B cell (primary cell): ENCODE measurements at regions of chr5 and their contacts with region 1.

Region 1: DNA sequence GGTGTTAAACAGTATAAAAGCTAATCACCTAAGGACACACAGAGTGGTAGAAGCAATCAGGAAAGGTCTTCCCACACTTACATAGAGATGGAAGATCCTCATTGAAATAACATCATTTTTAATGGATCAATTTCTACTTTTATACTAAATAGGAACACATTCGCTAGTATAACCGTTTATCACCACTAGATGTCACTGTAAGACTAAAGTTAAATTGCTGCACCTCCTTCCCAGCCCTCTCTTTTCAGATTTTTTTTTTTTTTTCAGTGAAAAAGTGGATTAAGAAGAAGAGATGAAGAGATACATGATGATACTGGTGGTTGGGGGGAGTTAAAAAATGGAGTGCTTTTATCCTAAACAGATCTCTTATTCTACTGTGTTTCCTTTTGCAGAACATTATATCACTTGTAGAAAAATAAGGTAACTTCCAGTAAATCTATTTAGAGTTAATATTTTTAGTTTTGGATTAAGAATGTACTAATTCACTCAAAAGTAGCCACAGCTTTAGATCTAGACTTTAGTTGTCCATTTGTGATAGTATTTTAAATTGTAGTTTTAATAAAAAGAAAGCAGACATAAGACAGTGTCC is 116.9 kb upstream of the ARRDC3 start:
- DNase-seq: peak; percentile 41
- ATAC-seq: no peak
- H3K4me3 ChIP-seq: no peak overlapping the region
- H3K4me3 Mint-ChIP-seq: no peak overlapping the region
- H3K27ac ChIP-seq: no peak overlapping the region
- H3K27ac Mint-ChIP-seq: no peak overlapping the region
- H3K4me1 ChIP-seq: no peaks in the 10 kb centered on the region
- H3K4me1 Mint-ChIP-seq: no peaks in the 10 kb centered on the region
- H3K27me3 ChIP-seq: no peaks in the 10 kb centered on the region
- H3K27me3 Mint-ChIP-seq: peaks cover 4% of the 10 kb centered on the region
- CTCF ChIP-seq: peak; percentile 84

Region 2: GRCh38 chr5:91464886-91465646 is 35.0 kb before region 1 on chr5:
- CTCF ChIA-PET with region 1: no interaction called
- POLR2A ChIA-PET with region 1: no interaction called
- intact Hi-C with region 1: no loop called
- DNase-seq: no peak
- ATAC-seq: no peak
- H3K4me3 ChIP-seq: no peak overlapping the region
- H3K4me3 Mint-ChIP-seq: no peak overlapping the region
- H3K27ac ChIP-seq: no peak overlapping the region
- H3K27ac Mint-ChIP-seq: no peak overlapping the region
- H3K4me1 ChIP-seq: no peaks in the 10 kb centered on the region
- H3K4me1 Mint-ChIP-seq: no peaks in the 10 kb centered on the region
- H3K27me3 ChIP-seq: no peaks in the 10 kb centered on the region
- H3K27me3 Mint-ChIP-seq: peaks cover 9% of the 10 kb centered on the region
- CTCF ChIP-seq: no peak

Region 3: DNA sequence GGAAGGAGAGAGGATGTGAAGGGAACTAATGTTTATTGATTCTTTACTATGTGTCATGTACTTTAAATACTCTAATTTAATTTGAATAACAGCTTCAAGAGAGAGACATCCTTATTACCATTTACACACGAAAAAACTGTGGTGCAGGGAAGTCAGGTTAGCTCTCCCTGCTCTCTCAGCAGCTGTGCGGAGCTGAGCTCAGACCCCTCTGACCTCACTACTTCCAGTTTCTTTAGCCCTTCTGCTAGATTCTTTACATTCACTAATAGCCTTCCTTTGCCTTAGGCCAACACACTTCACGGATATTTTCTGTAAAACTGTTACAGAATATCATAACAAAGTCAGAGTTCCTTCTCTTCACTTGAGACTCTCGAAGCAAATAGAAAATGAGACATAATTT is 14.4 kb after region 1 on chr5:
- CTCF ChIA-PET with region 1: interaction called, 14 read pairs
- POLR2A ChIA-PET with region 1: no interaction called
- intact Hi-C with region 1: no loop called
- DNase-seq: no peak
- ATAC-seq: no peak
- H3K4me3 ChIP-seq: no peak overlapping the region
- H3K4me3 Mint-ChIP-seq: no peak overlapping the region
- H3K27ac ChIP-seq: no peak overlapping the region
- H3K27ac Mint-ChIP-seq: no peak overlapping the region
- H3K4me1 ChIP-seq: no peaks in the 10 kb centered on the region
- H3K4me1 Mint-ChIP-seq: no peaks in the 10 kb centered on the region
- H3K27me3 ChIP-seq: no peaks in the 10 kb centered on the region
- H3K27me3 Mint-ChIP-seq: no peaks in the 10 kb centered on the region
- CTCF ChIP-seq: no peak